Heart right ventricle (tissue), 16 donors: ENCODE measurements at regions of chr11 and their contacts with region 1.

Region 1: DNA sequence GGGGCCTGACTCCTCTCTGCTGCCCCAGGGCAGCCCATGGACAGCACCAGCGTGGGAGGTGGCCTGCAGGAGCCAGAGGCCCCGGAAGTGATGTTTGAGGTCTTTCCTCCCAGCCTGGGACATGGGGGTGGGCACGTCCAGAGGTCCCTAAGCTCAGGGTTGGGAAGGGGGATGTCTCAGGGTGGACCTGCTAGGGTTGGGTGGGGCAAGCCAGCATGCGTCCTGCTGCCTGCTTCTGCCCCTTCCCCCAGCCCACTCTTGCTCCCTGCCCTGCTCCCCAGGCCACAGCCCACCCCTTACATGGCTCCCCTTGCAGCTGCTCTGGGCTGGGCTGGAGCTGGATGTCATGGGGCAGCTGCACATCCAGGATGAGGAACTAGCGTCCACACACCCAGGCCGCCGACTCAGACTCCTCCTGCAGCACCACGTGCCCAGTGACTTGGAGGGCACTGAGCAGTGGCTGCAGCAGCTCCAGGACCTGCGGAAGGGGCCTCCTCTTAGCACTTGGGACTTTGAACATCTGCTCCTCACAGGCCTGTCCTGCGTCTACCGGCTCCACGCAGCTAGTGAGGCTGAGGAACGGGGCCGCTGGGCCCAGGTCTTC is 1.3 kb downstream of the FAM180B start:
- DNase-seq: peak; percentile 37 to 48
- ATAC-seq: peak; percentile 18 to 57 (median 48)
- H3K4me3 ChIP-seq: peak overlapping the region in 1 of 10 donors; percentile 28
- H3K27ac ChIP-seq: peak overlapping the region in 2 of 10 donors; percentile 9 to 56
- H3K4me1 ChIP-seq: peaks cover 0 to 27% (median 10%) of the 10 kb centered on the region in 9 donors
- H3K27me3 ChIP-seq: peaks cover 0 to 39% (median 23%) of the 10 kb centered on the region in 7 donors
- CTCF ChIP-seq: no peak

Region 2: GRCh38 chr11:48341466-48341865 is 753.6 kb after region 1 on chr11:
- intact Hi-C with region 1: loop called in 1 of 10 experiments (anchors 10 kb)
- DNase-seq: no peak
- ATAC-seq: no peak
- H3K4me3 ChIP-seq: no peak overlapping the region
- H3K27ac ChIP-seq: no peak overlapping the region
- H3K4me1 ChIP-seq: no peaks in the 10 kb centered on the region
- H3K27me3 ChIP-seq: no peaks in the 10 kb centered on the region
- CTCF ChIP-seq: no peak